ENCODE measurements at regions of chrX and their contacts with region 1.

Region 1: GRCh38 chrX:151505796-151506195 is 57.7 kb upstream of the PASD1 start:
- ATAC-seq: peak in 3 of 8 experiments; percentile 74 to 87 (median 83)
- H3K4me3 ChIP-seq: no peak overlapping the region
- H3K27ac ChIP-seq: no peak overlapping the region
- H3K4me1 ChIP-seq: no peaks in the 10 kb centered on the region

Region 2: DNA sequence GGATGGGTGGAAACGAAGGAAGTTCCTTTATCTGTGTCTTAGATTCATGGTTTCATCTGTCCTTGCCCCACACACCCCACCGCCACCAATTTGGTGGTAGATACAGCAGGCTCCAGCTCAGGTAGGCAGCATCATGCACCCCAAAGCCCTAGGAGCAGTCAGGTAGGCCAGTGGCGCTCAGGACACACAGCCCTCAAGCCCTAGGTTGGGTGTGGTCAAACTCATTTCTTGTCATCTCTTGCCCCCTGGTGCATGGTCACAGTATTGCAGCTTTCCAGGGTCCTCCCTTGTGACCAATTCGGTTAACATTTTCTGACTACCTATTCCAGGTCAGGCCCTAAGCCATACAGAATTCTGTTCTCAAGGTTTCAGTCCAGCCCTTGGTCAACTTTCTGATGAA is 175.0 kb after region 1 on chrX:
- in situ Hi-C with region 1: loop called in 3 of 9 experiments (anchors 5 to 25 kb)
- ATAC-seq: peak in 5 of 8 experiments; percentile 5 to 55 (median 44)
- H3K4me3 ChIP-seq: no peak overlapping the region
- H3K27ac ChIP-seq: no peak overlapping the region
- H3K4me1 ChIP-seq: no peaks in the 10 kb centered on the region

Measured in motor neuron (in vitro differentiated cells).